ENCODE measurements at regions of chr9 and their contacts with region 1.

Region 1: DNA sequence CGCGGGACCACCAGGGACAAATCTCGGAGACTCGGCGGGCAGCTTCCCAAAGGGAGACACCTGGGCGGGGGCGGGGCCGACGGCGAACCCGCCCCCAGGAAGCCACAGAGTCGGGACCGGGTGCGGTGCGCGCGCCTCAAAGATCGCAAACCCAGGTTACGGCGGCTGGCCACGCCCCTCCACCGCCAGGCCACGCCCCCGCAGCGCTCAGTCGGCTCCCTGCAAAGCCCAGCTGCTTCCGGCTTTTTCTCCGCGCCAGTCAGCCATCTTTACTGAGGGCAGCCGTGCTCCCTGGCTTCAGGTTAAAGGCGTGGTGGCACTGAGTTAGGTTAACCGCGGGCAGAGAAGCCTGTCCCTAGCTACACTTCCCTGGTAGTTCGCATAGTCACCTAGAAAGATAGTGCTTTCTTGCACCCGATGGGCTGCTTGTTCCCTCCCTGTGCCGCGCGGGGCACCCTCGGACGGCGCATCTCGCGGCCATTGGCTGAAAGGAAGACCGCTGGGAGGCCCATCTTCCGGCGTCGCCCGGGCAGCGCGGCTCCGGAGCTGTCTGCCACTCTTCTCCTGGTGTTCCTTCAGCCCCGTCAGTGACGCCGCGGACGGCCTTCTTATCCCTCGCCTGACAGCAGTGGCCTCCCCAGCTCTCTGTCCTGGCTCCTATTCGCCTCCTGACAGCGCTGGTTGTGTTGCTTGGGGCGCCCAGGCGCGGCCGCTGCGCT is at the start of gene TBC1D2:
- DNase-seq: peak; percentile 89 to 94 (median 93)
- H3K4me3 ChIP-seq: peak within 1 kb of the TSS; percentile 58 to 99 (median 88)
- H3K27ac ChIP-seq: peak within 1 kb of the TSS; percentile 87 to 99 (median 97)
- H3K27me3 ChIP-seq: no peaks in the 10 kb centered on the region
- CTCF ChIP-seq: peak in 46 of 56 donors; percentile 2 to 61 (median 40)
- total RNA-seq, gene TBC1D2: 5.7 to 45.5 (median 12.8) TPM

Region 2: DNA sequence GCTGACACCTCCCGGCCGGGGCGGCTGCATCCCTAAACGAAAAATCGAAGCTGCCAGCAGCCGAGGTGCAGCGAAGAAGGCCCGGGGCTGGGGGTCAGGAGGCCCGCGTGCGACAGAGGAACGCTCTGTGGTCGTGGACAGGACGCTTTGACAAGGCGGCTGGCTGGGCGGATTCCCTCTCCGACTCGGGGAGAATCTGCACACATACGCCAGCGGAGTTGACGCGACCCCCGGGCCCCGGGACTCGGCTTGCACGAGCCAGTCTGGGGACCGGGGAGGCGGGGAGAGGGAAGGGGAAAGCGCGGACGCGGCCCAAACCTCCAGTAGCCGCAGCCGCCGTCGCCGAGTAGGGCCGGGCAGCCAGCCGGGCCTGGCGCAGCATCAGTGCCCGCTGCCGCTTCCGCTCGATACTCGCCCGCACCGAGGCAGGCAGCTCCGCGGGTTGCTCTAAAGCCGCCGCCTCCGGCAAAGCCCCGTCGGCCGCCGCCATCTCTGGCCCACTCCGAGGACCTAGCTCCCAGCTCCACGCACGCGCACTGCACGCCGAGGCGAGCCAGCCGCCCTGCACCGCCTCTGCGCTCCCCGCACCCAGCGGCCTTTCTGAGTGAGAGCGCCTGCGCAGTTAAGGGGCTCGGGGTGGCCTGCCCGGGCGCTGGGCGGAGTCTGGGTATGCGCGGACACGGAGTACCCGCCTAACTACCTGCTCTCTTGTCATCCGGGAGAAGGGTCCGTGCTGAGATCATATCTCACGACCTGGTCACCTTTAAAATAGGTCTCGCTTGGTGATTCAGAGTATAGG is 558.7 kb before region 1 on chr9 and contains the start of gene XPA:
- intact Hi-C with region 1: loop called (anchors 5 to 10 kb)
- DNase-seq: peak; percentile 89 to 98 (median 94)
- H3K4me3 ChIP-seq: peak within 1 kb of the TSS; percentile 64 to 99 (median 89)
- H3K27ac ChIP-seq: peak within 1 kb of the TSS; percentile 77 to 99 (median 94)
- H3K27me3 ChIP-seq: no peaks in the 10 kb centered on the region
- CTCF ChIP-seq: peak in 30 of 56 donors; percentile 12 to 56 (median 34)
- total RNA-seq, gene XPA: 12.5 to 32.8 (median 21.9) TPM

Region 3: DNA sequence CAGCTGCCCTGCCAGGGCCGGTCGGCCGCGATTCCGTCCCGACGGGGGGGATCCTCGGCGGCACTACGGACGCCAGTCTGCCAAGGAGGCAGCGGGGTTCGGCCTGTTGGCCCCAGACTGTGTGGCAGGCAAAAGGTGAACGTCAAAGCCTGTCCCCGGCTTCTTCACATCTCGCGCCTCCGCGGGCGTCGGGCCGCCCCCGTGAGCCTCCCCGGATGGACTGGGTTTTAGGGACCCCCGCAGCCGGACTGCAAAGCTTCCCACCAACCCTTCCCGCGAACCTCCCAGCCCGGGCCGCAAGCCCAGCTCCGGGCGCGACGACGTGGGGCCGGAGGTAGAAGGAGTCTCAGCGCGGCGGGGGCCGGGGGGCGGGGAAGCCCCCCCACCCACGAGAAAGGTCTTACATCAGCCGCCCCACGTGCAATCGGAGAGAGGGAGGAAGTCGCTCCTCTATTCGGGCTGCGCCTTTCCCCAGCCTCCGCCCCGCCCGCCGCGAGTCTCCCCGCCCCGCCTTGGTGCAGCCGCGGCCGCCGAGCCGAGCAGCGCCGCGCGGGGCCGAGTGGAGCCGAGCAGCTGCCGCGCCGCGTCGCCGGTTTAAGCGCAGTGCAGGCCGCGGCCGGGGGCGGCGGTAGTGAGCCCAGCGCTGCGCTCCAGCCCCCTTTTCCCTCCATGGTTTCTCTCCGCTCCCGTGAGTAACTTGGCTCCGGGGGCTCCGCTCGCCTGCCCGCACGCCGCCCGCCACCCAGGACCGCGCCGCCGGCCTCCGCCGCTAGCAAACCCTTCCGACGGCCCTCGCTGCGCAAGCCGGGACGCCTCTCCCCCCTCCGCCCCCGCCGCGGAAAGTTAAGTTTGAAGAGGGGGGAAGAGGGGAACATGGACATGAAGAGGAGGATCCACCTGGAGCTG is 272.8 kb before region 1 on chr9 and contains the start of gene ANP32B:
- intact Hi-C with region 1: loop called in 1 of 2 experiments (anchors 2 kb)
- DNase-seq: peak; percentile 83 to 95 (median 88)
- H3K4me3 ChIP-seq: peak within 1 kb of the TSS; percentile 64 to 96 (median 89)
- H3K27ac ChIP-seq: peak within 1 kb of the TSS; percentile 80 to 100 (median 98)
- H3K27me3 ChIP-seq: no peaks in the 10 kb centered on the region
- CTCF ChIP-seq: peak; percentile 49 to 98 (median 80)
- total RNA-seq, gene ANP32B: 41.2 to 135 (median 66.8) TPM

Region 4: GRCh38 chr9:98056269-98057137 is 199.2 kb before region 1 on chr9 and contains the start of gene NANS:
- intact Hi-C with region 1: loop called (anchors 2 to 5 kb)
- DNase-seq: peak; percentile 86 to 96 (median 93)
- H3K4me3 ChIP-seq: peak within 1 kb of the TSS; percentile 69 to 99 (median 91)
- H3K27ac ChIP-seq: peak within 1 kb of the TSS in 57 of 59 donors; percentile 52 to 93 (median 85)
- H3K27me3 ChIP-seq: no peaks in the 10 kb centered on the region
- CTCF ChIP-seq: peak in 19 of 56 donors; percentile 4 to 53 (median 33)
- total RNA-seq, gene NANS: 13.8 to 40.0 (median 23.9) TPM

Region 5: GRCh38 chr9:98202252-98202651 is 53.5 kb before region 1 on chr9:
- intact Hi-C with region 1: loop called (anchors 2 to 5 kb)
- DNase-seq: no peak
- H3K4me3 ChIP-seq: no peak overlapping the region
- H3K27ac ChIP-seq: no peak overlapping the region
- H3K27me3 ChIP-seq: no peaks in the 10 kb centered on the region
- CTCF ChIP-seq: no peak

Region 6: GRCh38 chr9:98207606-98208005 is 48.1 kb before region 1 on chr9:
- intact Hi-C with region 1: loop called (anchors 2 to 5 kb)
- DNase-seq: no peak
- H3K4me3 ChIP-seq: no peak overlapping the region
- H3K27ac ChIP-seq: no peak overlapping the region
- H3K27me3 ChIP-seq: no peaks in the 10 kb centered on the region
- CTCF ChIP-seq: no peak

Region 7: DNA sequence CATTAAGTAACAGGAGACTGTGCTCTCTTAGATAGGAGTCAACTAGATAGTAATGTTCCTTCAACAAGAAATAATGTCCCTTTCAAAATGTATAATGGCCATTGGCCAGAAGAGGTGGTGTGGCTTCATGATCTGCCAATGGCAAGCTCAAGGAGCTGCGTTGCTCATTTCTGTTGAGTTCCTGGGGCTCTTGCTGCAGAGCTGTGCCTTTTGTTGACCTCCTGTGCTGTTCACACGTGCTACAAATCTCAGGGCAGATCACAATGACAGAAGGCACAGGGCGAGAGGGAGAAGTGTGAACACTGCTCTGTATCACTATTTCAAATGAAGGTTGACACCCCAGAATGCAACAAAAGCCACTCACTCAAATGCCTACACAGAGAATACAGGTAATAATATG is 15.7 kb after region 1 on chr9:
- intact Hi-C with region 1: no loop called
- DNase-seq: no peak
- H3K4me3 ChIP-seq: no peak overlapping the region
- H3K27ac ChIP-seq: no peak overlapping the region
- H3K27me3 ChIP-seq: peaks cover 0 to 4% (median 0%) of the 10 kb centered on the region in 45 donors
- CTCF ChIP-seq: no peak